CD4-positive, alpha-beta T cell (primary cell): ENCODE measurements at regions of chr1 and their contacts with region 1.

Region 1: DNA sequence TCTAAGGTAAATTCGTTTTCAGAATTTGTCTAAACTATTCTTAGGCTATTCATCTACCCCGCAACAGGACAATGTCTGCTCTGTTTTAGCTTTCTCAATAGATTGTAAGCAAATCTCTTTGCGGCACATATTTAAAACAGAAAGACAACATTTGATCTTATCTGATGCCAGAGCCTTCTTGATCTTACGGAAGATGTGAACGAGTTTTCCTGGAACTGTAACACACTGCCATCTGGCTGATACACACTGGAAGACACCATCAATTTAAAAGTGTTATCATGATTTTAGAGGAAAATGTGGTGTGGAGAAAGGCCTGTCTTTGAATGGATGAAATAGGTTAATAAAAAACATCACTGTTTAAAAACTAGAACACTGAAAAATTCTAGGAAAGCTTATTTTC is 36.1 kb downstream of the COA6 start:
- DNase-seq: peak in 7 of 14 experiments; percentile 8 to 84 (median 41)
- ATAC-seq: peak; percentile 57
- H3K4me3 ChIP-seq: peak overlapping the region; percentile 38
- H3K4me3 Mint-ChIP-seq: peak overlapping the region; percentile 67
- H3K27ac ChIP-seq: peak overlapping the region; percentile 77
- H3K27ac Mint-ChIP-seq: peak overlapping the region; percentile 91
- H3K4me1 ChIP-seq: peaks cover 18% of the 10 kb centered on the region
- H3K4me1 Mint-ChIP-seq: peaks cover 50% of the 10 kb centered on the region
- H3K27me3 ChIP-seq: no peaks in the 10 kb centered on the region
- H3K27me3 Mint-ChIP-seq: no peaks in the 10 kb centered on the region
- CTCF ChIP-seq: peak; percentile 78

Region 2: GRCh38 chr1:234114648-234115307 is 294.6 kb before region 1 on chr1:
- CTCF ChIA-PET with region 1: no interaction called
- POLR2A ChIA-PET with region 1: no interaction called
- intact Hi-C with region 1: loop called in 1 of 2 experiments (anchors 5 kb)
- DNase-seq: peak in 8 of 14 experiments; percentile 3 to 69 (median 20)
- ATAC-seq: no peak
- H3K4me3 ChIP-seq: no peak overlapping the region
- H3K4me3 Mint-ChIP-seq: peak overlapping the region; percentile 61
- H3K27ac ChIP-seq: no peak overlapping the region
- H3K27ac Mint-ChIP-seq: no peak overlapping the region
- H3K4me1 ChIP-seq: peaks cover 4% of the 10 kb centered on the region
- H3K4me1 Mint-ChIP-seq: peaks cover 7% of the 10 kb centered on the region
- H3K27me3 ChIP-seq: peaks cover 3 to 10% of the 10 kb centered on the region in 2 experiments
- H3K27me3 Mint-ChIP-seq: peaks cover 24% of the 10 kb centered on the region
- CTCF ChIP-seq: peak; percentile 88

Region 3: GRCh38 chr1:234154320-234155251 is 254.7 kb before region 1 on chr1:
- CTCF ChIA-PET with region 1: no interaction called
- POLR2A ChIA-PET with region 1: no interaction called
- intact Hi-C with region 1: loop called in 1 of 2 experiments (anchors 2 kb)
- DNase-seq: peak in 6 of 14 experiments; percentile 3 to 71 (median 30)
- ATAC-seq: no peak
- H3K4me3 ChIP-seq: no peak overlapping the region
- H3K4me3 Mint-ChIP-seq: no peak overlapping the region
- H3K27ac ChIP-seq: no peak overlapping the region
- H3K27ac Mint-ChIP-seq: no peak overlapping the region
- H3K4me1 ChIP-seq: no peaks in the 10 kb centered on the region
- H3K4me1 Mint-ChIP-seq: no peaks in the 10 kb centered on the region
- H3K27me3 ChIP-seq: peaks cover 0 to 7% of the 10 kb centered on the region in 2 experiments
- H3K27me3 Mint-ChIP-seq: peaks cover 9% of the 10 kb centered on the region
- CTCF ChIP-seq: peak; percentile 91

Region 4: GRCh38 chr1:234212764-234213657 is 196.3 kb before region 1 on chr1:
- CTCF ChIA-PET with region 1: no interaction called
- POLR2A ChIA-PET with region 1: no interaction called
- intact Hi-C with region 1: loop called in 1 of 2 experiments (anchors 5 kb)
- DNase-seq: peak in 6 of 14 experiments; percentile 12 to 72 (median 37)
- ATAC-seq: peak; percentile 68
- H3K4me3 ChIP-seq: no peak overlapping the region
- H3K4me3 Mint-ChIP-seq: peak overlapping the region; percentile 76
- H3K27ac ChIP-seq: no peak overlapping the region
- H3K27ac Mint-ChIP-seq: peak overlapping the region; percentile 6
- H3K4me1 ChIP-seq: peaks cover 25% of the 10 kb centered on the region
- H3K4me1 Mint-ChIP-seq: peaks cover 20% of the 10 kb centered on the region
- H3K27me3 ChIP-seq: peaks cover 4 to 26% of the 10 kb centered on the region in 2 experiments
- H3K27me3 Mint-ChIP-seq: peaks cover 47% of the 10 kb centered on the region
- CTCF ChIP-seq: peak; percentile 64

Region 5: DNA sequence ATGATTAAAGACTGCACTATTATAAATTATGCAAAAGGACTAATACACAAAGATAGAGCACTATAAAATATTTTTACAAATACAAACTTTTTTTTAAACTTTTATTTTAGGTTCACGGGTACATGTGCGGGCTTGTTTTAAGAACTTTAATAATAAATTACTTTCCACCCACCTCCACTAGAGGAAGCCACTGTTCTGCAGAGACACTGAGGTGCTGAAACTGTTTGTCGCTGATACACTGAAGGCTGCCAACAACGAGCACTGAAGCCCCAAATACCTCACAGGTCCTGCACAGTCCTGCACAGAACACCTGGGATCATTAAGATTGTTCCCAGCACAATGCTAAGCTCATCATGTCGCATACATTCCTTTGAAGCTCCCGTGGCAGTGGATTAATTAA is 16.1 kb before region 1 on chr1:
- CTCF ChIA-PET with region 1: interaction called, 16 read pairs
- POLR2A ChIA-PET with region 1: interaction called, 12 read pairs
- intact Hi-C with region 1: loop called (anchors 1 to 2 kb)
- DNase-seq: peak in 5 of 14 experiments; percentile 8 to 63 (median 44)
- ATAC-seq: peak; percentile 84
- H3K4me3 ChIP-seq: no peak overlapping the region
- H3K4me3 Mint-ChIP-seq: peak overlapping the region; percentile 56
- H3K27ac ChIP-seq: no peak overlapping the region
- H3K27ac Mint-ChIP-seq: peak overlapping the region; percentile 86
- H3K4me1 ChIP-seq: no peaks in the 10 kb centered on the region
- H3K4me1 Mint-ChIP-seq: peaks cover 24% of the 10 kb centered on the region
- H3K27me3 ChIP-seq: no peaks in the 10 kb centered on the region
- H3K27me3 Mint-ChIP-seq: no peaks in the 10 kb centered on the region
- CTCF ChIP-seq: peak; percentile 51